ENCODE measurements at regions of chr20 and their contacts with region 1.

Region 1: GRCh38 chr20:62386383-62387218 is at the start of gene RPS21:
- DNase-seq: peak; percentile 95 to 98 (median 97)
- ATAC-seq: peak; percentile 93 to 94
- H3K4me3 ChIP-seq: peak within 1 kb of the TSS; percentile 82
- H3K27ac ChIP-seq: peak within 1 kb of the TSS; percentile 89
- H3K4me1 ChIP-seq: peaks cover 8% of the 10 kb centered on the region
- H3K27me3 ChIP-seq: no peaks in the 10 kb centered on the region
- total RNA-seq, gene RPS21: 703 to 815 (median 736) TPM

Region 2: DNA sequence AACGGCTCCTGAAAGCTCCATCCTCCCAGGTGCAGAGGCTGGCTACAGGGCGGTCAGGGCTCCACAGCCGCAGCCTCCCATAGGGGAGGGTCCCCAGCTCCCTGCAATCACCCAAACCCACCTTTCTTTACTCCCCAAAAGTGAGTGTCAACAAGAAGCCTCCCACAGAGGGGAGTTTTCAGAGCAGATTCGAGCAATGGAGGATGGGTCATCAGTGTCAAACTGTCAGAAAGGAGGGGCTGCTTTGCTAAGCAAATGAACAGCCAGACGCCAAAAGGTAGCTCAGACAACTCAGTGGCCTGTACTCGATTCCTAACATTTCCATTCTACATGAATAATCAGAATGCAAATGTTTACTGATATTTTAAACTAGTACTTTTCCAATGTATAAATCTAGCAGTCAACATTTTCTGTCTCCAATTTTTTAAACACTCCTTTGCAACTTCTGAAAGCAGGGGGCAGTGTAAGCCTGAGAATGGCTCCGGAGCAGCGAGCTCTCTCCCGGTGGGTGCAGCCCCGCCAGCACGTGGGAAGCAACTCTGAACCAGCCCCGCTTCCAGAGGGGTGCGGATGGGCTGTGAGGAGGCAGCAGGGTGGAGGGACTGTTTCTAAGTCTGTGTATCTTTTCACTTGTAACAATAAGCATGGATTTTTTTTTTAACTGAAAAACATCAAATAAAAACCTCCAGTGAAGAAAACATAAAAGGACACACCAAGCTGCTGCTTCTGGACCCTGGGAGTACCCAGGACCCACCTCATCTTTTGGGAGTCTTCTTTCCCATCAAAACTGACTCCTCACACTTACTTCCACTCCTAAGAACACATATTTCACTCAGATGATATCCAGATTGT is 375.8 kb before region 1 on chr20:
- intact Hi-C with region 1: loop called in 1 of 4 experiments (anchors 10 kb)
- DNase-seq: peak; percentile 51 to 78 (median 72)
- ATAC-seq: peak; percentile 55 to 68
- H3K4me3 ChIP-seq: no peak overlapping the region
- H3K27ac ChIP-seq: no peak overlapping the region
- H3K4me1 ChIP-seq: no peaks in the 10 kb centered on the region
- H3K27me3 ChIP-seq: no peaks in the 10 kb centered on the region

Region 3: GRCh38 chr20:62182613-62183425 is 203.8 kb before region 1 on chr20 and contains the start of gene MTG2:
- intact Hi-C with region 1: loop called in 1 of 4 experiments (anchors 10 kb)
- DNase-seq: peak; percentile 96 to 98 (median 97)
- ATAC-seq: peak; percentile 98
- H3K4me3 ChIP-seq: peak within 1 kb of the TSS; percentile 96
- H3K27ac ChIP-seq: peak within 1 kb of the TSS; percentile 90
- H3K4me1 ChIP-seq: peaks cover 8% of the 10 kb centered on the region
- H3K27me3 ChIP-seq: no peaks in the 10 kb centered on the region
- total RNA-seq, gene MTG2: 20.4 to 25.7 (median 25.1) TPM

Region 4: GRCh38 chr20:62302341-62303058 is 84.1 kb before region 1 on chr20 and contains the start of gene ADRM1:
- intact Hi-C with region 1: loop called in 3 of 4 experiments (anchors 2 to 5 kb)
- DNase-seq: peak; percentile 96 to 99 (median 98)
- ATAC-seq: peak; percentile 91 to 94
- H3K4me3 ChIP-seq: peak within 1 kb of the TSS; percentile 87
- H3K27ac ChIP-seq: peak within 1 kb of the TSS; percentile 96
- H3K4me1 ChIP-seq: peaks cover 7% of the 10 kb centered on the region
- H3K27me3 ChIP-seq: no peaks in the 10 kb centered on the region
- total RNA-seq, gene ADRM1: 65.0 to 80.9 (median 73.4) TPM

Region 5: DNA sequence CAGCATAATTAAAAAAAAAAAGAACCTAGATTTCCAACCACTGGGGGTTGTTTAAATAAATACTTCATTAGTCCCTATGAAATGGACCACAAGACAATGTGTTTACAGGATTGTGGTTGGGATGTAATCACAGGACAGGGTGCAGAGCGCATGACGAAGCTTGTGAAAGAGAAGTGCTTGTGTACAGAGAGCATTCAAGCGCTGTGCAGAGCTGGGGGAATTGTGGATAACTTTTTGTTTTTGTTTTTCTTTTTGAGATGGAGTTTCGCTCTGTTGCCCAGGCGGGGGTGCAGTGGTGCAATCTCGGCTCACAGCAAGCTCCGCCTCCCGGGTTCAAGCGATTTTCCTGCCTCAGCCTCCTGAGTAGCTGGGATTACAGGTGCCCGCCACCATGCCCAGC is 41.8 kb before region 1 on chr20:
- intact Hi-C with region 1: loop called in 1 of 4 experiments (anchors 5 kb)
- DNase-seq: peak in 1 of 3 donors; percentile 13
- ATAC-seq: no peak
- H3K4me3 ChIP-seq: no peak overlapping the region
- H3K27ac ChIP-seq: no peak overlapping the region
- H3K4me1 ChIP-seq: no peaks in the 10 kb centered on the region
- H3K27me3 ChIP-seq: no peaks in the 10 kb centered on the region

Measured in right cardiac atrium (tissue), 5 donors.